ENCODE measurements at regions of chr1 and their contacts with region 1.

Region 1: DNA sequence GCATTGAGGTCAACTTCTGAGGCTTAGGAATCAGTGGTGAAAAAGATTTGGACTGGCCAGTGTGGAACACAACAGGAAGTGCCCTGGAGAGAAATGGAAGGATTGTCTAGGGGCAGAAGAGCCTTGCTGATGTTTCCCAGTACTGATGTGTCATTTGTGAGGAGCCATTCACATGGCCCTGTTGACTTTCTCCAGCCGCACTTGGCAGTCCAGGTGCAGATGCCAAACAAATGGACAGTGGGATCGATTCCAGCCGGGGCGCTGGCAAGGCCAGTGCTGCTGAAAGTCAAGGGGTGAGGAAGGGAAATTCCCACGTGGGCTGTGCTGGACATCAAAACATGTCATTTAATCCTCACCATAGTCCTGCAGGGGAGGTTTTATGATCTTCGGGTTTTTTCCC is 4.9 kb upstream of the TRIM63 start:
- DNase-seq: no peak
- H3K4me3 ChIP-seq: no peak overlapping the region
- H3K27ac ChIP-seq: no peak overlapping the region
- H3K4me1 ChIP-seq: no peaks in the 10 kb centered on the region
- H3K27me3 ChIP-seq: no peaks in the 10 kb centered on the region
- CTCF ChIP-seq: no peak
- EP300 ChIP-seq: no peak
- POLR2A ChIP-seq: no peak
- RAD21 ChIP-seq: no peak

Region 2: DNA sequence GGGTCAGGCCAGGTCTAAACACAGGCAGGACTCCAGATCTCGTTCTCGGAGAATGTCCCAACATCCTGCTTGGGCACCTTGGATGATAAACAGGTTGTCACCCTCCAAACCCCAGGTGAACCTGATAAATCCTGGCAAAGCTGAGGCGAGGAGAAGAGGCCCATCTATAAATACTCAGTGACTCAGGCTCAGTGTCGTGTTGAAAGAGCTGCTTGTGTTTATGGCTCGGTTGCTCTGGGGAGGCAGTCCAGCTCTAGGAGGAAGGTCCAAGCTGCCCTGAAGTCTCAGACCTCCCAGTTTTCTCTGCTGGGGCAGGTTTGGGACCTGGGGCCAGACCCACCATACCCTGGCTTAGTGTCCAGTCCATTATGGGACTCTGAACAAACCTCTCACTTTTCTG is 10.9 kb after region 1 on chr1:
- CTCF ChIA-PET with region 1: interaction called, 23 read pairs
- POLR2A ChIA-PET with region 1: interaction called, 4 read pairs
- DNase-seq: no peak
- H3K4me3 ChIP-seq: no peak overlapping the region
- H3K27ac ChIP-seq: no peak overlapping the region
- H3K4me1 ChIP-seq: peaks cover 0 to 9% (median 6%) of the 10 kb centered on the region in 4 experiments; a peak in 4 of 7 replicates
- H3K27me3 ChIP-seq: no peaks in the 10 kb centered on the region; a peak in 1 of 7 replicates
- CTCF ChIP-seq: no peak
- EP300 ChIP-seq: no peak
- POLR2A ChIP-seq: no peak
- RAD21 ChIP-seq: no peak

Measured in H1 (cell line).